ENCODE measurements at regions of chr5 and their contacts with region 1.

Region 1: GRCh38 chr5:157233515-157233914 is 32.4 kb upstream of the CYFIP2 start:
- DNase-seq: peak in 3 of 9 experiments; percentile 33 to 85 (median 69)
- ATAC-seq: peak; percentile 88
- H3K4me3 ChIP-seq: no peak overlapping the region
- H3K4me3 Mint-ChIP-seq: no peak overlapping the region
- H3K27ac ChIP-seq: peak overlapping the region; percentile 23 to 52
- H3K27ac Mint-ChIP-seq: peak overlapping the region; percentile 86
- H3K4me1 ChIP-seq: peaks cover 48% of the 10 kb centered on the region
- H3K4me1 Mint-ChIP-seq: peaks cover 62% of the 10 kb centered on the region
- H3K27me3 ChIP-seq: no peaks in the 10 kb centered on the region
- H3K27me3 Mint-ChIP-seq: no peaks in the 10 kb centered on the region
- CTCF ChIP-seq: no peak

Region 2: DNA sequence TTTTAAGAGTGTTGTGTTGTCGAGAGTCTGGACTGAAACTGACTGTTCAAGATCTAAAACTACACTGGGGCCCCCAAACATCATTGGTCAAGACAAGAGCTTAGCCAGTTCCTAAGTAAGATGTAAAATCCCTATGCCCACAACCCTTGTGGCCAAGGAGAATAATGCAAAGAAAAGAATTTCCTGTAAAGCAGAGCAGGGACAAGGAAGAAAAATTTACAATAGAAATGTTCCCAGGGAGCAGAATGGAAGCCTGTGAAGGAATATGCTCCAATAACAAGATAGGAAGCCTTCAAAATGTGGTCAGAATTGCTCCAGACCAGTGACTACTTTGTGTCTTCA is 363.0 kb before region 1 on chr5:
- CTCF ChIA-PET with region 1: no interaction called
- POLR2A ChIA-PET with region 1: no interaction called
- intact Hi-C with region 1: no loop called
- DNase-seq: no peak
- ATAC-seq: no peak
- H3K4me3 ChIP-seq: no peak overlapping the region
- H3K4me3 Mint-ChIP-seq: no peak overlapping the region
- H3K27ac ChIP-seq: no peak overlapping the region
- H3K27ac Mint-ChIP-seq: no peak overlapping the region
- H3K4me1 ChIP-seq: no peaks in the 10 kb centered on the region
- H3K4me1 Mint-ChIP-seq: peaks cover 4% of the 10 kb centered on the region
- H3K27me3 ChIP-seq: no peaks in the 10 kb centered on the region
- H3K27me3 Mint-ChIP-seq: no peaks in the 10 kb centered on the region
- CTCF ChIP-seq: no peak

Region 3: GRCh38 chr5:157245477-157245876 is 12.0 kb after region 1 on chr5:
- CTCF ChIA-PET with region 1: interaction called, 3 read pairs
- POLR2A ChIA-PET with region 1: interaction called, 9 read pairs
- intact Hi-C with region 1: loop called in 1 of 2 experiments (anchors 1 kb)
- DNase-seq: no peak
- ATAC-seq: no peak
- H3K4me3 ChIP-seq: no peak overlapping the region
- H3K4me3 Mint-ChIP-seq: no peak overlapping the region
- H3K27ac ChIP-seq: peak overlapping the region in 1 of 2 experiments; percentile 72
- H3K27ac Mint-ChIP-seq: peak overlapping the region; percentile 95
- H3K4me1 ChIP-seq: peaks cover 62% of the 10 kb centered on the region
- H3K4me1 Mint-ChIP-seq: peaks cover 75% of the 10 kb centered on the region
- H3K27me3 ChIP-seq: no peaks in the 10 kb centered on the region
- H3K27me3 Mint-ChIP-seq: no peaks in the 10 kb centered on the region
- CTCF ChIP-seq: no peak